ENCODE measurements at regions of chr6 and their contacts with region 1.

Region 1: GRCh38 chr6:35297601-35298481 is at the start of gene DEF6:
- DNase-seq: peak; percentile 94
- H3K4me3 Mint-ChIP-seq: peak within 1 kb of the TSS; percentile 88
- H3K27ac Mint-ChIP-seq: peak within 1 kb of the TSS; percentile 97
- H3K4me1 Mint-ChIP-seq: peaks cover 54% of the 10 kb centered on the region
- H3K27me3 Mint-ChIP-seq: no peaks in the 10 kb centered on the region

Region 2: DNA sequence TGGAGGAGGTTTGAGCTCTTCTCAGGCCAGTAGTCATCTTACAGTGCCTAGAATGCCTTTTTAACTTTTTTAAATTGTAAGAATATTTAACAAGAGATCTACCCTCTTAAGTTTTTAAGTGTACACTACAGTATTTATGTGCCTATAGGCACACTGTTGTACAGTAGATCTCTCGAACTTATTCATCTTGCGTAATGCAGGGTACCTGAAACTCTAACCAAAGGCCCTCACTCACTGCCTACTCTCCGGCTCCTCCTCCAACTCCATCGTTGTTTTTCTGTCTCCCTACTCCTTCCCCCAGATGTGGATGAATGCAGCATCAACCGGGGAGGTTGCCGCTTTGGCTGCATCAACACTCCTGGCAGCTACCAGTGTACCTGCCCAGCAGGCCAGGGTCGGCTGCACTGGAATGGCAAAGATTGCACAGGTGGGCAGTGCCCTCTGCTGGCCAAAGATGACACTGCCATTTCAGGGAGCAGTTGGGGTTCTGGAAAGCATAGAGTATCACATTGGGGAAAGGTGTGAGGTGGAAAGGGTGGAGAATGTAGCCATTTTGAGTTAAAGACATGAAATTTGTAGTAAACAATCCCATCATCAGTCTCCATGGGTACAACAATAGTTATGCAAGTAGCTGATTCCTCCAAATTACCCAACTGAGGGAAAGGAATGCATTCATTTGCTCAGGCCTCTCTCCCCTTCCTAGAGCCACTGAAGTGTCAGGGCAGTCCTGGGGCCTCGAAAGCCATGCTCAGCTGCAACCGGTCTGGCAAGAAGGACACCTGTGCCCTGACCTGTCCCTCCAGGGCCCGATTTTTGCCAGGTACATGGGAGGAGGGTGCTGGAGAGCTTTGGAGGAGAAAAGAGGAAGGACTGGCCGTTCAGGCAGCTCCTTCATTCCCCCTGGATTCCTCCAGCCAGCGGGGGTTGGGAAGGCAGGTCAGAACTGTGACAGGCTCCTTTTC is 56.7 kb before region 1 on chr6:
- CTCF ChIA-PET with region 1: no interaction called
- DNase-seq: peak; percentile 84
- H3K4me3 Mint-ChIP-seq: no peak overlapping the region
- H3K27ac Mint-ChIP-seq: no peak overlapping the region
- H3K4me1 Mint-ChIP-seq: no peaks in the 10 kb centered on the region
- H3K27me3 Mint-ChIP-seq: peaks cover 4% of the 10 kb centered on the region

Region 3: DNA sequence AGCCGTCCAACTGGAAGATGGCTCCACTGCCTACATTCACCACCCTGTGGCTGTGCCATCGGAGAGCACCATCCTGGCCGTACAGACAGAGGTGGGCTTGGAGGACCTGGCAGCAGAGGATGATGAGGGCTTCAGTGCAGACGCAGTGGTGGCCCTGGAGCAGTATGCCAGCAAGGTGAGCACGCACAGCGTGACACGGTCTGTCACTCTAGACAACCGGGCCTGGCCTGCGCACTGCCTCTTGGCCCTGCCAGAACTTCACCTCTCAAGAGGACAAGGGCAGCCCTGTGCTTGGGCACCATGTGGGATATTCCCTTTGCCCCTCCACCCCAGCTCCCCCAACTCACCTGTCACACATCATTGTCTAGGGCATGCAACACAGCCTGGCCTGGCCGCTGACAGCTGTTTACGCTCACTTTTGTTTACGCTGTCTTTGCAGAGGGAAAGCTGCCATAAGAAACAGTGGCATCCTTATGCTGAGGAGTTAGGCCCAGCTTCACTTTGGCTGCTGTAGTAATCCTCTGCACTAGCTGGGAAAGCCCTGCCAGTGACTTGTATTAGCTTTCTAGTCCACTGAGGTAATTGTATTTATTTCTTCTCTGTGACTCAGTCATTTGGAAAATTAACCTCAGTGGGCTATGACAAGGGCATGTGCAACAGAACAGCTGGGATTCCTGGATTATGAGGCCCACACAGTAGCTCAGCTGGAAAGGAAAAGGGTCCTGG is 10.0 kb before region 1 on chr6:
- CTCF ChIA-PET with region 1: interaction called, 16 read pairs
- DNase-seq: no peak
- H3K4me3 Mint-ChIP-seq: no peak overlapping the region
- H3K27ac Mint-ChIP-seq: no peak overlapping the region
- H3K4me1 Mint-ChIP-seq: no peaks in the 10 kb centered on the region
- H3K27me3 Mint-ChIP-seq: no peaks in the 10 kb centered on the region

Region 4: GRCh38 chr6:35311390-35312075 is 13.7 kb after region 1 on chr6:
- CTCF ChIA-PET with region 1: interaction called, 57 read pairs
- DNase-seq: peak; percentile 76
- H3K4me3 Mint-ChIP-seq: peak overlapping the region; percentile 62
- H3K27ac Mint-ChIP-seq: peak overlapping the region; percentile 97
- H3K4me1 Mint-ChIP-seq: peaks cover 87% of the 10 kb centered on the region
- H3K27me3 Mint-ChIP-seq: no peaks in the 10 kb centered on the region

Region 5: GRCh38 chr6:35327349-35328027 is 29.6 kb after region 1 on chr6:
- CTCF ChIA-PET with region 1: interaction called, 174 read pairs
- DNase-seq: peak; percentile 86
- H3K4me3 Mint-ChIP-seq: no peak overlapping the region
- H3K27ac Mint-ChIP-seq: peak overlapping the region; percentile 67
- H3K4me1 Mint-ChIP-seq: peaks cover 22% of the 10 kb centered on the region
- H3K27me3 Mint-ChIP-seq: no peaks in the 10 kb centered on the region

Region 6: GRCh38 chr6:35342258-35343091 is 44.6 kb after region 1 on chr6 and contains the start of gene PPARD:
- CTCF ChIA-PET with region 1: interaction called, 10 read pairs
- DNase-seq: peak; percentile 98
- H3K4me3 Mint-ChIP-seq: peak within 1 kb of the TSS; percentile 95
- H3K27ac Mint-ChIP-seq: peak within 1 kb of the TSS; percentile 86
- H3K4me1 Mint-ChIP-seq: peaks cover 53% of the 10 kb centered on the region
- H3K27me3 Mint-ChIP-seq: peaks cover 7% of the 10 kb centered on the region

Region 7: GRCh38 chr6:35452186-35453090 is 154.6 kb after region 1 on chr6 and contains the start of gene FANCE:
- CTCF ChIA-PET with region 1: interaction called, 113 read pairs
- DNase-seq: peak; percentile 95
- H3K4me3 Mint-ChIP-seq: peak within 1 kb of the TSS; percentile 80
- H3K27ac Mint-ChIP-seq: peak within 1 kb of the TSS; percentile 80
- H3K4me1 Mint-ChIP-seq: peaks cover 57% of the 10 kb centered on the region
- H3K27me3 Mint-ChIP-seq: peaks cover 30% of the 10 kb centered on the region

Region 8: GRCh38 chr6:35468181-35468979 is 170.5 kb after region 1 on chr6 and contains the start of gene RPL10A:
- CTCF ChIA-PET with region 1: interaction called, 61 read pairs
- DNase-seq: peak; percentile 97
- H3K4me3 Mint-ChIP-seq: peak within 1 kb of the TSS; percentile 99
- H3K27ac Mint-ChIP-seq: peak within 1 kb of the TSS; percentile 99
- H3K4me1 Mint-ChIP-seq: peaks cover 41% of the 10 kb centered on the region
- H3K27me3 Mint-ChIP-seq: no peaks in the 10 kb centered on the region

Measured in activated naive CD4-positive, alpha-beta T cell treated with anti-CD3 and anti-CD28 coated beads, Interleukin-2, amount 10 ng/mL, durations not matched to agents 7 days and 5 days (primary cell).